CD8-positive, alpha-beta T cell (primary cell): ENCODE measurements at regions of chr6 and their contacts with region 1.

Region 1: GRCh38 chr6:137218917-137219663 is at the start of gene IFNGR1:
- DNase-seq: peak; percentile 89 to 97 (median 96)
- ATAC-seq: peak; percentile 87
- H3K4me3 ChIP-seq: peak within 1 kb of the TSS; percentile 62 to 72
- H3K4me3 Mint-ChIP-seq: peak within 1 kb of the TSS; percentile 94
- H3K27ac ChIP-seq: peak within 1 kb of the TSS; percentile 89 to 94
- H3K27ac Mint-ChIP-seq: peak within 1 kb of the TSS; percentile 97
- H3K4me1 ChIP-seq: peaks cover 30% of the 10 kb centered on the region
- H3K4me1 Mint-ChIP-seq: peaks cover 69% of the 10 kb centered on the region
- H3K27me3 ChIP-seq: no peaks in the 10 kb centered on the region
- H3K27me3 Mint-ChIP-seq: no peaks in the 10 kb centered on the region
- CTCF ChIP-seq: no peak
- total RNA-seq, gene IFNGR1: 106 to 117 TPM

Region 2: GRCh38 chr6:136822376-136823127 is 396.5 kb before region 1 on chr6 and contains the start of gene PEX7:
- CTCF ChIA-PET with region 1: no interaction called
- POLR2A ChIA-PET with region 1: no interaction called
- intact Hi-C with region 1: loop called (anchors 1 to 10 kb)
- DNase-seq: peak; percentile 76 to 94 (median 84)
- ATAC-seq: peak; percentile 91
- H3K4me3 ChIP-seq: peak within 1 kb of the TSS; percentile 57 to 77
- H3K4me3 Mint-ChIP-seq: peak within 1 kb of the TSS; percentile 93
- H3K27ac ChIP-seq: peak within 1 kb of the TSS; percentile 70 to 82
- H3K27ac Mint-ChIP-seq: peak within 1 kb of the TSS; percentile 95
- H3K4me1 ChIP-seq: peaks cover 14% of the 10 kb centered on the region
- H3K4me1 Mint-ChIP-seq: peaks cover 30% of the 10 kb centered on the region
- H3K27me3 ChIP-seq: no peaks in the 10 kb centered on the region
- H3K27me3 Mint-ChIP-seq: peaks cover 3% of the 10 kb centered on the region
- CTCF ChIP-seq: peak; percentile 68
- total RNA-seq, gene PEX7: 2.6 to 2.8 TPM

Region 3: DNA sequence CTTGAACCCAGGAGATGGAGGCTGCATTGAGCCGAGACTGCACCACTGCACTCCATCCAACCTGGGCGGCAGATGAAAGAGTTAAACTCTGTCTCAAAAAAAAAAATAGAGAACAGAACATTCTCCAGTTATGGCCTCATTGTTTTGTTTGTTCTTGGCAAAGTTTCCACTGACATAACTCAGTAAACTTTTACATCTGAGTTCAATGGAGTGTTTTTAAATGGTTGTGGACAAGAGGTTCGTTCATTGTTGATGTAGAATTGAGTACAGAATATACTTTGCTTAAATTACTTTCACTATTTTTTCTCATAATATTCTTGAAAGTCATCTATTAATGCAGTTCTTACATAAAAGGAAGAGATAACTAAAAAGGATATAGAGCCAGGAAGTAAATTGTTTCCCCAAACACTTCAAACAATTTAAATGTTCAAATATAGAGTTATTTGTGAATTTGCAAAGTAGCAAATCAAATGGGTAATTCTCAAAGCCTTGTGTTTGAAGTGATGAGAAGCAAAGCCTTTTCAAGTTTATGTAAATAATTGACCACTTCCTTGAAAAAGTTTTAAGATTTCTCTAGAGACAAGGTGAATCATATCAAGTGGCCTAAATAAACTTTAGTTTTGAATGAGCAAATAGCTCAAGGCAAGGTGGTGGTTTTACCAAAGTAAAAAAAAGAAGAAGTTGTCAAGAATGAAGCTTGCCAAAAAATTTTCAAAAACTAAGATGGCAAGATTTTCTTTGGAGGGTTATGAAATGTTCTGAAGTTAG is 42.5 kb after region 1 on chr6:
- CTCF ChIA-PET with region 1: no interaction called
- POLR2A ChIA-PET with region 1: no interaction called
- intact Hi-C with region 1: loop called in 1 of 2 experiments (anchors 5 kb)
- DNase-seq: peak in 2 of 9 experiments; percentile 39 to 61
- ATAC-seq: peak; percentile 68
- H3K4me3 ChIP-seq: no peak overlapping the region
- H3K4me3 Mint-ChIP-seq: peak overlapping the region; percentile 23
- H3K27ac ChIP-seq: peak overlapping the region in 1 of 2 experiments; percentile 35
- H3K27ac Mint-ChIP-seq: peak overlapping the region; percentile 72
- H3K4me1 ChIP-seq: peaks cover 8% of the 10 kb centered on the region
- H3K4me1 Mint-ChIP-seq: peaks cover 21% of the 10 kb centered on the region
- H3K27me3 ChIP-seq: no peaks in the 10 kb centered on the region
- H3K27me3 Mint-ChIP-seq: no peaks in the 10 kb centered on the region
- CTCF ChIP-seq: no peak

Region 4: DNA sequence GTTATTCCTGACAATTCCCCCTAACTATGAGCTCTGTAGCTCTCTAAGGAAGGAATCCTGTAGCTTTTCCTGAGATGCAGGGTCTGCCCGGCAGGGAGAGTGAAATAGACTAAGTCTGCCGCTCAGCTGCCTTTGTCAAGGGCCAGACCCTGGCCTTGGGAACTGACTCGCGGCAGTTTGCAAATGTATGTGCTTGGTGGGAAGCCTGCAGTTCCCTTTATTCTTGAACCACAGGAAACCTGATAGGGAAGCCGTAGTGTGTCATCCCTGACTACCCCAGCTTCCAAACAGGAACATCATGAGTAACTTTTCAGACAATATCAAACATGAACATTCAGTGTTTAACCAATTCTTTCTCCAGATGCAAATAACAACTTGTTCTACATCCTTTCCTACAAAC is 78.8 kb after region 1 on chr6:
- CTCF ChIA-PET with region 1: no interaction called
- POLR2A ChIA-PET with region 1: no interaction called
- intact Hi-C with region 1: no loop called
- DNase-seq: no peak
- ATAC-seq: no peak
- H3K4me3 ChIP-seq: no peak overlapping the region
- H3K4me3 Mint-ChIP-seq: no peak overlapping the region
- H3K27ac ChIP-seq: no peak overlapping the region
- H3K27ac Mint-ChIP-seq: no peak overlapping the region
- H3K4me1 ChIP-seq: no peaks in the 10 kb centered on the region
- H3K4me1 Mint-ChIP-seq: no peaks in the 10 kb centered on the region
- H3K27me3 ChIP-seq: no peaks in the 10 kb centered on the region
- H3K27me3 Mint-ChIP-seq: no peaks in the 10 kb centered on the region
- CTCF ChIP-seq: no peak

Region 5: GRCh38 chr6:137389150-137389704 is 170.1 kb after region 1 on chr6:
- CTCF ChIA-PET with region 1: no interaction called
- POLR2A ChIA-PET with region 1: no interaction called
- intact Hi-C with region 1: no loop called
- DNase-seq: peak; percentile 12 to 91 (median 75)
- ATAC-seq: peak; percentile 96
- H3K4me3 ChIP-seq: no peak overlapping the region
- H3K4me3 Mint-ChIP-seq: peak overlapping the region; percentile 67
- H3K27ac ChIP-seq: peak overlapping the region; percentile 4 to 79
- H3K27ac Mint-ChIP-seq: peak overlapping the region; percentile 84
- H3K4me1 ChIP-seq: peaks cover 35% of the 10 kb centered on the region
- H3K4me1 Mint-ChIP-seq: peaks cover 74% of the 10 kb centered on the region
- H3K27me3 ChIP-seq: no peaks in the 10 kb centered on the region
- H3K27me3 Mint-ChIP-seq: no peaks in the 10 kb centered on the region
- CTCF ChIP-seq: no peak

Region 6: DNA sequence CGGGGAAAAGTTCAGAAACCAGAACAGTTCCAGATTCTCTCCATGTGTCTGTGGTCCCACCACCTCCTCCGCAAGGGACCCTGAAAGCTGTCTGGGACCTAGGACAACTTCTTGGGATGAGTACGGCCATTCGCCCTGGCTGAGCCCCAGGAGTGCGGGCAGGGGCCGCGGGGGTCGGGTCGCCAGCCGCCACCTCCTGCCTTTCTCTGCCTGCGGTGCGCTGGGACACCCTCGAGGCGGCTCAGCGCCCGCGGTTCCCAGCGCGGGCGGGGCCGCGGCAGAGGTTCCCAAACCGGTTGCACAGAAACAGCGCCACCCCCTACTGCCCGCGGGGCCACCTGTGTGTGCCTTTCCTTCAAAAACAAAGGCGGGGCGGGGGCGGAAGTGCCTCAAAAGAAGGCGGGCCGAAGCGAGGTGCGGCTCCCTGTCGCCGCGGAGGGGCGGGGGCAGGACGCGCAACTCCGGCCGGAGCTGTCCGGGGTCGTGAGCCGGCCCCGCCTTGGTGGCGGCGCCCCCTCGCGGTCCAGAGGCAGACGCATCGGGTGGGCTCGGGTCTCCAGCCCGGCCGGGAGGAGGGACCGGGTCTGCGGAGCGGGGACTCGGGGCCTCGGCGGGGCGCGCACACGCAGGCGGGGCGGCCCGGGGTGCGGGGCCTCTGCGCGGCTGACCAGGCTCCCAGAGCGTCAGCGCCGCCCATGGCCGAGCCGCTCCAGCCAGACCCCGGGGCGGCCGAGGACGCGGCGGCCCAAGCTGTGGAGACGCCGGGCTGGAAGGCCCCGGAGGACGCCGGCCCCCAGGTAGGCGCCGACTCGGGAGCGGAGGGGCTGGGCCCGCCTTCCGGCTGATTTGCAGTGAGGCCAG is 1184.9 kb after region 1 on chr6 and contains the start of gene HEBP2:
- CTCF ChIA-PET with region 1: no interaction called
- POLR2A ChIA-PET with region 1: no interaction called
- intact Hi-C with region 1: loop called (anchors 5 kb)
- DNase-seq: peak; percentile 85 to 96 (median 93)
- ATAC-seq: peak; percentile 91
- H3K4me3 ChIP-seq: peak within 1 kb of the TSS; percentile 63 to 85
- H3K4me3 Mint-ChIP-seq: peak within 1 kb of the TSS; percentile 90
- H3K27ac ChIP-seq: peak within 1 kb of the TSS; percentile 63 to 85
- H3K27ac Mint-ChIP-seq: peak within 1 kb of the TSS; percentile 97
- H3K4me1 ChIP-seq: peaks cover 15% of the 10 kb centered on the region
- H3K4me1 Mint-ChIP-seq: peaks cover 23% of the 10 kb centered on the region
- H3K27me3 ChIP-seq: no peaks in the 10 kb centered on the region
- H3K27me3 Mint-ChIP-seq: no peaks in the 10 kb centered on the region
- CTCF ChIP-seq: peak; percentile 23
- total RNA-seq, gene HEBP2: 64.6 to 69.1 TPM

Region 7: GRCh38 chr6:139028658-139029469 is 1809.8 kb after region 1 on chr6 and contains the start of gene ABRACL:
- CTCF ChIA-PET with region 1: no interaction called
- POLR2A ChIA-PET with region 1: no interaction called
- intact Hi-C with region 1: loop called in 1 of 2 experiments (anchors 5 kb)
- DNase-seq: peak; percentile 38 to 89 (median 74)
- ATAC-seq: peak; percentile 88
- H3K4me3 ChIP-seq: peak within 1 kb of the TSS; percentile 93 to 99
- H3K4me3 Mint-ChIP-seq: no peak within 1 kb of the TSS
- H3K27ac ChIP-seq: peak within 1 kb of the TSS; percentile 86 to 90
- H3K27ac Mint-ChIP-seq: peak within 1 kb of the TSS; percentile 96
- H3K4me1 ChIP-seq: peaks cover 24% of the 10 kb centered on the region
- H3K4me1 Mint-ChIP-seq: peaks cover 31% of the 10 kb centered on the region
- H3K27me3 ChIP-seq: no peaks in the 10 kb centered on the region
- H3K27me3 Mint-ChIP-seq: no peaks in the 10 kb centered on the region
- CTCF ChIP-seq: no peak
- total RNA-seq, gene ABRACL: 30.4 to 30.5 TPM